ENCODE measurements at regions of chr9 and their contacts with region 1.

Region 1: DNA sequence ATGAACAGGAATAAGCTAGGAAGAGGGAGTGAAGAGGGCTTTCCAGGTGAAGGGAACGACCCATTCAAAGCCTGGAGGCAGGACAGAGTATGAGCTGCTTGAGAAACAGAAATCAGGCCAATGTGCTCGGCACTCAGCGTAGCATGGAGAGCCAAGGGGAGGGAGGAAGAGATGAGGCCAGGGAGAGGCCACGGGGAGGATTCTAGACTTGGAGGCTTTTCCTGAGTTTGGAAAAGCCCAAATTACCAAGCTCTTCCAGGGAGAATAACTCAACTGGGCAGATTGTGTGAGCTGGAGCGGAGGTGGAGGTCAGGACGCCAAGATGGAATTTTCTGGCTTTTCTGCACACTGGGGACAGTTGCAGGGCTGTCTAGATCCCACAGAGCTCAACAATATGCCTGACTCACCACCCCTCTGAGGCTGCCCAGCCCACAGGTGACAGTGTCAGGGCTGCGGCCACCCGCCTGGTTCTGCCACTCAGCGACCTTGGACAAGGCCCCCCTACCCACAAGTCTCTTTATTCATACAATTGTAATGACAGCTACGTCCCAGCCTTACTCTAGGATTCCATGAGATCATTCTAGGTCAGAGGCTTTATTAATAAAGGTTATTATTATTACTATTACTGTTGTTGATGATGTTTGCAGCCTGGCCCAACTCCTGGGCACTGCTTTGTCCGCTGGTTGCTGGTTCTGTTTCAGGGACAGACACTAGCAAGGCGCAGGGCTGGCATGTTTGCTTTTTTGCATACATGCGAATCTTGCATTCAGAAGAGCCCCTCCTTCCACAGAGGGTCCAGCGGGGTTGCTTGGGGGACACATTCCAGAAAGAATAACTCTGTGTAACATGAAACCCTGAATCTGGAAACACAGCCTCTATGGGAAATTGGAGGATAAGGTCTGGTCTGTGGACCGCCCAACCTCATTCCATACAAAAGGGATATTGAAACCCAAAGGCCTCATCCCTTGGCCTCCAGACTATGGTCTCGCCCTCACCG is 9.4 kb upstream of the LMX1B start:
- DNase-seq: no peak
- H3K4me3 ChIP-seq: no peak overlapping the region
- CTCF ChIP-seq: no peak

Region 2: GRCh38 chr9:126661521-126662220 is 57.3 kb after region 1 on chr9:
- in situ Hi-C with region 1: loop called (anchors 5 kb)
- DNase-seq: no peak
- H3K4me3 ChIP-seq: no peak overlapping the region
- CTCF ChIP-seq: no peak